BJ (cell line): ENCODE measurements at regions of chr6 and their contacts with region 1.

Region 1: DNA sequence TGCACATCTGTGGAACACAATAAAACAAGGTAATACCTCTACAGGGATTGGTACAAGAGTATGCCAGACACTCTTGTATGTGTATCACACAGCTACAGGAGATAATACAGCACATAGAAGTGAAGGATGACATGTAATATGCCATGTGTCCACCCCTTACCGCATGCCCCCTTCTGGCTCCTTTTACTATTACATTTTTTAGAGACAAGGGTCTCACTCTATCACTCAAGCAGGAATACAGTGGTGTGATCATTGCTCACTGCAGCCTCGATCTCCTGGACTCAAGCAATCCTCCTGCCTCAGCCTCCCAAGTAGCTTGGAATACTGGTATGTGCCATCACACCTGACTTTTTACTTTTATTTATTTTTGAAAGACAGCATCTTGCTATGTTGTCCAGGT is 4.2 kb upstream of the NCR3 start:
- DNase-seq: no peak
- H3K4me3 ChIP-seq: no peak overlapping the region
- H3K27me3 ChIP-seq: no peaks in the 10 kb centered on the region
- CTCF ChIP-seq: peak; percentile 37

Region 2: GRCh38 chr6:31210123-31210522 is 386.9 kb before region 1 on chr6:
- CTCF ChIA-PET with region 1: no interaction called
- POLR2A ChIA-PET with region 1: no interaction called
- DNase-seq: no peak
- H3K4me3 ChIP-seq: no peak overlapping the region
- H3K27me3 ChIP-seq: no peaks in the 10 kb centered on the region
- CTCF ChIP-seq: no peak

Region 3: GRCh38 chr6:31541658-31542521 is 55.1 kb before region 1 on chr6 and contains the start of gene DDX39B:
- CTCF ChIA-PET with region 1: interaction called, 433 read pairs
- POLR2A ChIA-PET with region 1: interaction called, 6 read pairs
- DNase-seq: peak; percentile 85
- H3K4me3 ChIP-seq: peak within 1 kb of the TSS; percentile 67
- H3K27me3 ChIP-seq: no peaks in the 10 kb centered on the region
- CTCF ChIP-seq: no peak
- polyA plus RNA-seq, gene DDX39B: 412 and 584 TPM in 2 replicates

Region 4: DNA sequence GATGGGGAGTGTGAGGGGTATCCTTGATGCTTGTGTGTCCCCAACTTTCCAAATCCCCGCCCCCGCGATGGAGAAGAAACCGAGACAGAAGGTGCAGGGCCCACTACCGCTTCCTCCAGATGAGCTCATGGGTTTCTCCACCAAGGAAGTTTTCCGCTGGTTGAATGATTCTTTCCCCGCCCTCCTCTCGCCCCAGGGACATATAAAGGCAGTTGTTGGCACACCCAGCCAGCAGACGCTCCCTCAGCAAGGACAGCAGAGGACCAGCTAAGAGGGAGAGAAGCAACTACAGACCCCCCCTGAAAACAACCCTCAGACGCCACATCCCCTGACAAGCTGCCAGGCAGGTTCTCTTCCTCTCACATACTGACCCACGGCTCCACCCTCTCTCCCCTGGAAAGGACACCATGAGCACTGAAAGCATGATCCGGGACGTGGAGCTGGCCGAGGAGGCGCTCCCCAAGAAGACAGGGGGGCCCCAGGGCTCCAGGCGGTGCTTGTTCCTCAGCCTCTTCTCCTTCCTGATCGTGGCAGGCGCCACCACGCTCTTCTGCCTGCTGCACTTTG is 21.6 kb before region 1 on chr6 and contains the start of gene TNF:
- CTCF ChIA-PET with region 1: interaction called, 182 read pairs
- POLR2A ChIA-PET with region 1: interaction called, 3 read pairs
- DNase-seq: no peak
- H3K4me3 ChIP-seq: no peak within 1 kb of the TSS
- H3K27me3 ChIP-seq: no peaks in the 10 kb centered on the region; the same call in 1 of the 2 replicates
- CTCF ChIP-seq: no peak
- polyA plus RNA-seq, gene TNF: not detected in 2 replicates

Region 5: GRCh38 chr6:31609519-31610406 is 12.8 kb after region 1 on chr6:
- CTCF ChIA-PET with region 1: interaction called, 34 read pairs
- POLR2A ChIA-PET with region 1: no interaction called
- DNase-seq: no peak
- H3K4me3 ChIP-seq: no peak overlapping the region
- H3K27me3 ChIP-seq: no peaks in the 10 kb centered on the region
- CTCF ChIP-seq: no peak